Left cardiac atrium (tissue), 4 donors: ENCODE measurements at regions of chr3 and their contacts with region 1.

Region 1: GRCh38 chr3:47989981-47990440 is 26.2 kb downstream of the MAP4 start:
- DNase-seq: peak; percentile 79
- ATAC-seq: peak; percentile 97 to 98

Region 2: GRCh38 chr3:47836986-47837385 is 153.0 kb before region 1 on chr3:
- intact Hi-C with region 1: loop called (anchors 5 to 10 kb)
- DNase-seq: no peak
- ATAC-seq: no peak

Region 3: DNA sequence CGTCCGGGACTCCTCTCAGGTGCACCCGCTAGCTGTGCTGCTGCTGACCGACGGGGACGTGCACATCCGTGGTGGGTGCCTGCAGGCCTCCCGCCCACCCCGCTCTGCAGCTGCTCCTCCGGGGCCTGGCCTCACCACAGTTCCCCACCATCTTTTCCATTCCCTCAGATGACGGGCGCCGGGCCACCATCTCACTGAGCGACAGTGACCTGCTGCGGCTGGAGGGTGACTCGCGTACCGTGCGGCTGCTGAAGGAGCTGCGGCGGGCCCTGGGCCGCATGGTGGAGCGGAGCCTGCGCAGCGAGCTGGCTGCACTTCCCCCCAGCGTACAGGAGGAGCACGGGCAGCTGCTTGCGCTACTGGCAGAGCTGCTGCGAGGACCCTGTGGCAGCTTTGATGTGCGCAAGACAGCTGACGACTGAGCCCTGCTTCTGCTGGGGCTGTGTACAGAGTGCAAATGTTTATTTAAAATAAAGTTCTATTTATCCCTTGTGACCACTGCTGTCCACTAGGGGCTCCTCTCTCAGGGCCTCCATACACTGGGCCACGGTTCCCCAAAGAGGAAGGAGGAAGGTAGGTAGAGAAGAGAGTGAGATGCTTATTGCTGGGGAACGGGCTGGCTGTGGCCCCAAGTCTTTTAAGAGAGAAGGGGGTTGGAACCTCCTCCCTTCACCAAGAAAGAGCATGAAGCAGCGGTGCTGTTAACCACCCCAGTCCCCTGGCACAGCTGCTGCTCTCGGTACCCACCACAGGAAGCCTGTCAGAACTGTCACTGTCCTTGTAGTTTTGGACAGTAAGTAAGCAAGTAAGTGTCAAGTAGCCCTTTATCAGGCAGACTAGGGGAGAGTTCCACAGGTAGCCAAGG is 140.1 kb before region 1 on chr3:
- intact Hi-C with region 1: loop called in 1 of 2 experiments (anchors 10 kb)
- DNase-seq: no peak
- ATAC-seq: peak in 1 of 2 donors; percentile 2

Region 4: DNA sequence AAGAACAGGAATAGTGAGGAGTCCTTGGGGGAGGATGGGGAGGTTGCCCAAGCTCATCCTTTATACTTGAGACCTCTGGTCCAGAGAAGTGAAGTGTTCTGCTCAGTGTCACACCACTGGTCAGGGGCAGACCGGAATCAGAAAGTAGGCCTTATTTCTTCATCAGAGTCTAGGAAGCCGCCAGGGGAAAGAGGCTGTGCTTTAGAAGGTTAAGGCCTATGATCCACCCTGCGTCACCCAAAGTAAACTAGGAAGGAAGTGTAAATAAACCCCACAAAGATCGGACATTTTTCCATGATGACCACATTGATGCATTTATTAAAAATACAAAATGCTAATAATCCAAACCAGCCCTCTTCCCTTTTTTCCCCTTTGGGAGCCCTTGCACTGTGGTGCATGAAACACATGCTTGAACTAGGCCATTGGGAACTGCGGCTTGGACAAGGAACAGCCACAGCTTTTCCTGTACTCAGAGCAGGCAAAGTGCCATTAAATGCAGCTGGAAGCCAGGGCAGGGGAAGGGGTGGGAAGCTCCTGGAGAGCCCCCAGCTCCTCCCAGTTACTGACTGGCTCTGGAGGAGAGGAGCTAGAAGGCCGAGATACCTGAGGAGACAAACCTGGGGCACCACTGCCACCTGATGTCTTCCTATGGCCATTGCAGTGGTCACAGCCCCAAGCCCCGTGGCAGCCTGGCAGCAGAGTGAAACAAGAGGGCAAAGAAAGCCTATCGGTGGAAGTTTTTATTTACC is 161.2 kb after region 1 on chr3:
- intact Hi-C with region 1: loop called (anchors 5 to 10 kb)
- DNase-seq: peak; percentile 80
- ATAC-seq: peak; percentile 97